Activated naive CD4-positive, alpha-beta T cell treated with anti-CD3 and anti-CD28 coated beads for 36 hours (primary cell): ENCODE measurements at regions of chr2 and their contacts with region 1.

Region 1: GRCh38 chr2:130355578-130356431 is at the start of gene PTPN18:
- DNase-seq: peak; percentile 54
- H3K4me3 Mint-ChIP-seq: peak within 1 kb of the TSS; percentile 74
- H3K27ac Mint-ChIP-seq: no peak within 1 kb of the TSS
- H3K4me1 Mint-ChIP-seq: peaks cover 5% of the 10 kb centered on the region
- H3K27me3 Mint-ChIP-seq: no peaks in the 10 kb centered on the region
- total RNA-seq, gene PTPN18: 24.7 to 25.3 TPM

Region 2: GRCh38 chr2:130241041-130241707 is 114.6 kb before region 1 on chr2:
- CTCF ChIA-PET with region 1: no interaction called
- intact Hi-C with region 1: no loop called
- DNase-seq: no peak
- H3K4me3 Mint-ChIP-seq: no peak overlapping the region
- H3K27ac Mint-ChIP-seq: no peak overlapping the region
- H3K4me1 Mint-ChIP-seq: no peaks in the 10 kb centered on the region
- H3K27me3 Mint-ChIP-seq: peaks cover 12% of the 10 kb centered on the region

Region 3: GRCh38 chr2:130391058-130391871 is 35.5 kb after region 1 on chr2:
- CTCF ChIA-PET with region 1: no interaction called
- intact Hi-C with region 1: loop called (anchors 5 kb)
- DNase-seq: peak; percentile 83
- H3K4me3 Mint-ChIP-seq: peak overlapping the region; percentile 71
- H3K27ac Mint-ChIP-seq: no peak overlapping the region
- H3K4me1 Mint-ChIP-seq: peaks cover 3% of the 10 kb centered on the region
- H3K27me3 Mint-ChIP-seq: peaks cover 15% of the 10 kb centered on the region